GM10248 (cell line): ENCODE measurements at regions of chr4 and their contacts with region 1.

Region 1: GRCh38 chr4:15610855-15611254 is 44.3 kb downstream of the FBXL5 start:
- DNase-seq: no peak
- CTCF ChIP-seq: no peak

Region 2: GRCh38 chr4:15089979-15090378 is 520.9 kb before region 1 on chr4:
- CTCF ChIA-PET with region 1: no interaction called
- POLR2A ChIA-PET with region 1: no interaction called
- DNase-seq: no peak
- CTCF ChIP-seq: no peak

Region 3: GRCh38 chr4:15562114-15562513 is 48.7 kb before region 1 on chr4:
- CTCF ChIA-PET with region 1: no interaction called
- POLR2A ChIA-PET with region 1: no interaction called
- DNase-seq: no peak
- CTCF ChIP-seq: no peak

Region 4: DNA sequence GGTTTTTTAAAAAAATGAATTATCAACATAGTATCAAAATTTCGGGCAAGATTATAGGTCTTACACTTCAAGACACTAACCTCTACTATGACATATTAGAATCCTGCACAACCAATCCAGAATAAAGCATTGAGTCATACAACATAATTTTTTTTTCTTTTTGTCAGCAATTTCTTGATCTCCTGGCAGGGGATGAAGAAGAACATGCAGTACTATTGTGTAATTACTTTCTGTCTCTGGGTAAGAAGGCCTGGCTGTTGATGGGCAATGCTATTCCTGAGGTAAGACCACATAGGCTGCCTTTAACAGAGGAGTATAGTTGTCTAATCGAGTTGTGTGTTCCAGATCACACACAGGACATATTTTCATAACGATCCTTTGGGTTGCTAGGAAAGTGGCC is 23.2 kb before region 1 on chr4:
- CTCF ChIA-PET with region 1: no interaction called
- POLR2A ChIA-PET with region 1: no interaction called
- DNase-seq: no peak
- CTCF ChIP-seq: no peak

Region 5: DNA sequence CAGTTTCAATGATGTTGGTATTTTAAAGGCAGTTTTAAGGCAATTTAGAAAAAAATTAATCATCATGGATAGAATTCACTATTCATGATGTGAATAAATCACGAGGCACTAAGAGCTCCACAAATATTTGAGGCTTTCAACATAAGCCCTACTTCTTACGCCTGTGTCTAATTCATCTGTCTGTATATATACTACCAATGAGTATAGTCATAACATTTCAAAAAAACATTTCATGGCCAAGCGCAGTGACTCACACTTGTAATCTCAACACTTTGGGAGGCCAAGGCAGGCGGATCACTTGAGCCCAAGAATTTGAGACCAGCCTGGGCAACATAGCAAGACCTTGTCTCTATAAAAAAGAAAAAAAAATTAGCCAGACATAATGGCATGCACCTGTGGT is 12.2 kb before region 1 on chr4:
- CTCF ChIA-PET with region 1: interaction called, 14 read pairs
- POLR2A ChIA-PET with region 1: no interaction called
- DNase-seq: no peak
- CTCF ChIP-seq: no peak

Region 6: GRCh38 chr4:15690020-15690809 is 79.4 kb after region 1 on chr4:
- CTCF ChIA-PET with region 1: no interaction called
- POLR2A ChIA-PET with region 1: no interaction called
- DNase-seq: no peak
- CTCF ChIP-seq: no peak